ENCODE measurements at regions of chr21 and their contacts with region 1.

Region 1: DNA sequence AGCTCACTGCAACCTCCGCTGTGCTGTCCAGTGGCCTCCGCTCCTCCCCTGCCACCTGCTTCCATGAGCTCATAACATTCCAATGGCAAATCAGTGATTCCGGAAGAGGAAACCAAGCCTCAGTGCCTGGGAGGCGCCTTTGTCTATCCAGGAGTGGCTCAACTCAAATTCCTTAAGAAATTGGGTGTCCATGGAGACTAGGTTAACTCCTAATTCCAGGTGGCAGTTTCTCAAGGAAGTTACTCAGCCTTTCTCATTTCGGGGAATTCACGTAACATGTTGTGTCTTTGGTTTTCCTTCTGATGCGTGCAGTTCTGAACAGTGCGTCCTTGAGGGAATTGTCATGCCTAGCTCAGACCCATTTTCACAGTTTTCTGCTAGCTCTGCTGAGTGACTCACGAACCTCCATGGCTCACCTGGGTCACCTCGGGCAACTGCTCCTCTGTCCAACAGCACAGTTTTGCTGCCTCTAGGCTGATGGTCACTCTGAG is 89.9 kb upstream of the DSCAM start:
- ATAC-seq: peak in 1 of 8 experiments; percentile 92
- H3K4me3 ChIP-seq: no peak overlapping the region
- H3K27ac ChIP-seq: no peak overlapping the region
- H3K4me1 ChIP-seq: peaks cover 0 to 4% of the 10 kb centered on the region in 2 donors

Region 2: DNA sequence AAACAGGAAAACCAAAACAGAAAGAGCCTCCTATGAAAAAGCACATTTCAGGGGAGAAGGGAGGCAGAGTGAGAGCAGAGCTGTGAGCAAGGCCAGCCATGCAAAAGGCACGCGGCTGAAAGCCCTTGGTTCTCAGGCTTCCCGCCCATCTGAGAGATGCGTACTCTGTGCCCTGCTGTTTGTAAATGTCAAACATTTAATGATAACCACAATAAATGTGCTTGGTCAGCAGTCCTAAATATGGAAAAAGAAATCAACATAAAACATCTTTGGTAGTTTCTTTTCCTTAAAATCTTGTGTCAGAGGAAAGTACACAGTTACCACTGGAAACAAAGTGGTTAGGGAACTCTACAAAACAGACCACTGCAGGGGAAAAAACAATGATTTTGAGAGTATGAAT is 372.9 kb before region 1 on chr21:
- in situ Hi-C with region 1: no loop called
- ATAC-seq: peak in 2 of 8 experiments; percentile 60 to 71
- H3K4me3 ChIP-seq: no peak overlapping the region
- H3K27ac ChIP-seq: no peak overlapping the region
- H3K4me1 ChIP-seq: peaks cover 0 to 19% of the 10 kb centered on the region in 2 donors

Region 3: DNA sequence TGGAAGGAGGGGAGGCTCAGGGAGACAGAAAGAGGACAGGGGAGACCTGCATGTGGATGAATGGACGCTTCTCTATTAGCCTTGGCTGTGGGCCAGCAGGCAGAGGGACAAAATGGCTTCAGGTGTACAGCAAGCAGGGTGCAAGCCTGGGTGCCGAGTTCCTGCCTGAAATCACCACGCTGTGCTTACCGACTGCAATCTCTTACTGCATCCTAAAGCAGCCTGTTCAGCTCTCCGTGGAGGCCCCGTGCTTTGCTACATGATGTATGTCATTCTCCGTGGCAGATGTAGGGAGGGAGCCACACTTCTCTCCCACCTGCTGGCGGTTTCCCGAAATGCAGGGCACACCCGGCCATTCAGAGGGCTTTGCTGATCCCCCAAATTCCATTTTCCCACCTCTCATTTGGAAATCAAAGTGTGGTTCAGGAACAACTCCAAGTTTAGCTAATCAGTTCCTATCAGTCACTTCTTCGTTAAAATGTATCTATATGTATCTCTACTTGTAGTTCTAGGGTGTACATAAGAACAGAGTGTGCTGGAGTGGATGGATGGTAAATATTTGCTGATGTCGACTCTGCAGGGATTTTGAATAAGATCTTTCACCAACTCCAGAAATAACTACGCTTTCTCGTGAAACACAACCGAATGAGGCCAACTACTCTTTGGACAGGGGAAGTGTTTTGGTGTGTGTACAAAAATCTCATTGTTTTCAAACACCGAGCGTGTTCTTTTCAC is 108.9 kb after region 1 on chr21:
- in situ Hi-C with region 1: loop called in 1 of 9 experiments (anchors 25 kb)
- ATAC-seq: peak in 7 of 8 experiments; percentile 29 to 99 (median 97)
- H3K4me3 ChIP-seq: no peak overlapping the region
- H3K27ac ChIP-seq: peak overlapping the region in 1 of 2 donors; percentile 3
- H3K4me1 ChIP-seq: peaks cover 11 to 28% of the 10 kb centered on the region in 2 donors

Region 4: GRCh38 chr21:41419911-41420862 is 483.4 kb after region 1 on chr21:
- in situ Hi-C with region 1: no loop called
- ATAC-seq: peak; percentile 85 to 93 (median 88)
- H3K4me3 ChIP-seq: peak overlapping the region; percentile 12 to 43 (median 36)
- H3K27ac ChIP-seq: peak overlapping the region in 1 of 2 donors; percentile 80
- H3K4me1 ChIP-seq: peaks cover 15 to 18% of the 10 kb centered on the region in 2 donors

Measured in motor neuron (in vitro differentiated cells).